ENCODE measurements at regions of chr17 and their contacts with region 1.

Region 1: GRCh38 chr17:64129764-64130558 is at the start of gene ERN1:
- DNase-seq: peak; percentile 93
- H3K4me3 Mint-ChIP-seq: peak within 1 kb of the TSS; percentile 94
- H3K27ac Mint-ChIP-seq: peak within 1 kb of the TSS; percentile 93
- H3K4me1 Mint-ChIP-seq: peaks cover 18% of the 10 kb centered on the region
- H3K27me3 Mint-ChIP-seq: no peaks in the 10 kb centered on the region
- CTCF ChIP-seq: no peak
- total RNA-seq, gene ERN1: 79.5 and 87.0 TPM in 2 replicates

Region 2: GRCh38 chr17:63911657-63912426 is 218.1 kb before region 1 on chr17:
- CTCF ChIA-PET with region 1: interaction called, 14 read pairs
- POLR2A ChIA-PET with region 1: interaction called, 4 read pairs
- intact Hi-C with region 1: no loop called
- DNase-seq: peak; percentile 36
- H3K4me3 Mint-ChIP-seq: no peak overlapping the region
- H3K27ac Mint-ChIP-seq: no peak overlapping the region
- H3K4me1 Mint-ChIP-seq: no peaks in the 10 kb centered on the region
- H3K27me3 Mint-ChIP-seq: peaks cover 29% of the 10 kb centered on the region
- CTCF ChIP-seq: peak; percentile 83

Region 3: DNA sequence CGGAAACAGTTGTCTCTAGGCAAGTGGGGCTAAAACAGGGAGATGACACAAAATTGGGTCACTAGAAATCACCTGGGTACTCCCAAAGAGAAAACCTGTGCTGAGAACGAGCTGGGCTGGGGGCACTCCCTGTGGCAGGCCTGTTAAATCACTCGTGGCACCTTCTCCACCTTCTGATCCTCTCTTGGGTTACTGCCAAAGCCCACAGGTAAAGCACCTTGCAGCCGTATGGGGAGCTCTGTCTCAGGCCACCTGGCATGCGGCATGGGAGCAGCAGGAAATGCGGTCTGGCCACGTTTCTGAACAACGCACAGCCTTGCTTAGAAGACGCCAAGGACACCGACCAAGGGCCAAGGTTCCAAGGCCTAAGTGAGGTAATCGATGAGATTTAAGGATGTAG is 88.0 kb before region 1 on chr17:
- CTCF ChIA-PET with region 1: interaction called, 27 read pairs
- POLR2A ChIA-PET with region 1: interaction called, 3 read pairs
- intact Hi-C with region 1: no loop called
- DNase-seq: no peak
- H3K4me3 Mint-ChIP-seq: no peak overlapping the region
- H3K27ac Mint-ChIP-seq: no peak overlapping the region
- H3K4me1 Mint-ChIP-seq: no peaks in the 10 kb centered on the region
- H3K27me3 Mint-ChIP-seq: no peaks in the 10 kb centered on the region
- CTCF ChIP-seq: no peak

Region 4: DNA sequence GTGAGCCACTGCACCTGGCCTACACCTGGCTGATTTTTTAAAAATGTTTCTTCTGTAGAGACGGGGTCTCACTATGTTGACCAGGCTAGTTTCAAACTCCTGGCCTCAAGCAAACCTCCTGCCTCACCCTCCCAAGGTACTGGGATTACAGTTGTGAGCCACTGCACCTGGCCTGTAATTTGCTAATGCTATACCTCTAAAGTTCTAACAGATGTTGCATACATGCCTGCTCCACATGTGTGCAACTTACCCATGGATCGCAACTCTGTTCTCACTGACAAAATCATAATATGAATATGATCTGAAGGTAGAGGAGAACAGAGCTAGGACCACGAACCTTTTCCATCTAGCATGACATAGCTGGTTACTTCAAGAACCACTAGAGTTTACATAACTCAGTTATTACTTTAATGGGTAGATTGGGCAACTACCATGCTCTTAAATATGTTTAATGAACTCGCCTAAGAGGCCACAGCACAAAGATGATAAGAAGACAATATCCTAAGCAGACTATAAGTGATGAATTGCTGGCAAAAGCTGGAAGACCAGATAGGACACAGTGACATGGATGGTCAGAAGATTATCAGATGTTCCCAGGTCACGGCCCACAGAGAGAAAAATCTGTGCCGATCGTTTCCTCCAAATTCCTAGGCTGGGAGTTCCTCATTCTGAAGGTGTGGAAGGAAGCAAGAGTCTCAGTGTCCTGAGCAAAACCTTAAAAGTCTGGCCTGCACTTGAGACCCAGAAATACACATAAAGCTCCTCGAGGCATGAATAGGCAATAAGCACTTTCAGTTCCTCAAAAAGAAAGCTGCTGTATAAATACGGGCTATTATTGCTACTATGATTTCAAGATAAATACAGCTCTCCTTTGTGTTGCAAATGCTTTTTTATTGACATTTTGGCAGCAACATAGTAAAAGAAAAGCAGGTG is 55.9 kb before region 1 on chr17:
- CTCF ChIA-PET with region 1: interaction called, 16 read pairs
- POLR2A ChIA-PET with region 1: interaction called, 37 read pairs
- intact Hi-C with region 1: loop called (anchors 1 kb)
- DNase-seq: no peak
- H3K4me3 Mint-ChIP-seq: no peak overlapping the region
- H3K27ac Mint-ChIP-seq: peak overlapping the region; percentile 79
- H3K4me1 Mint-ChIP-seq: peaks cover 20% of the 10 kb centered on the region
- H3K27me3 Mint-ChIP-seq: no peaks in the 10 kb centered on the region
- CTCF ChIP-seq: no peak

Region 5: GRCh38 chr17:64117981-64118979 is 11.7 kb before region 1 on chr17:
- CTCF ChIA-PET with region 1: interaction called, 7 read pairs
- POLR2A ChIA-PET with region 1: interaction called, 79 read pairs
- intact Hi-C with region 1: no loop called
- DNase-seq: peak; percentile 76
- H3K4me3 Mint-ChIP-seq: no peak overlapping the region
- H3K27ac Mint-ChIP-seq: no peak overlapping the region
- H3K4me1 Mint-ChIP-seq: peaks cover 44% of the 10 kb centered on the region
- H3K27me3 Mint-ChIP-seq: no peaks in the 10 kb centered on the region
- CTCF ChIP-seq: no peak

Region 6: DNA sequence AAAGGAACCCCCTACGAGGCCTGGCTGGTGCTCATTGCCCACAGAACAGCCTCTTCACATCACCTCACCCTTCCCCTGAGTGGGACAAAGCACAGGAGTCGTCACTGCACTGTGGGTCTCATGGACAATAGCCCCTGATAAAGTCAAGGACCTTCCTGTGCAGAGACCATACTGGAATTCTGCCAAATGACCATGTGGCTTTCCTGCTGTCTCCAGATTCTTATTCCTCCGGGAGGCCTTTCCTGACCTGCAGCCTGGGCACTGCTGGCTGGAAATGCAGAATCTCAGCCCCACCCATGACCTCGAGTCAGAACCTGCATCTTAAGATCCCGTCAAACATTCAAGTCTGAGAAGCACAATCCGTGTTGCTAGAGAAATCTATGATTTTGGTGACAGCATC is 60.5 kb after region 1 on chr17:
- CTCF ChIA-PET with region 1: no interaction called
- POLR2A ChIA-PET with region 1: no interaction called
- intact Hi-C with region 1: no loop called
- DNase-seq: no peak
- H3K4me3 Mint-ChIP-seq: no peak overlapping the region
- H3K27ac Mint-ChIP-seq: no peak overlapping the region
- H3K4me1 Mint-ChIP-seq: no peaks in the 10 kb centered on the region
- H3K27me3 Mint-ChIP-seq: no peaks in the 10 kb centered on the region
- CTCF ChIP-seq: no peak

Region 7: GRCh38 chr17:65181237-65182061 is 1051.5 kb after region 1 on chr17:
- CTCF ChIA-PET with region 1: no interaction called
- POLR2A ChIA-PET with region 1: no interaction called
- intact Hi-C with region 1: no loop called
- DNase-seq: no peak
- H3K4me3 Mint-ChIP-seq: no peak overlapping the region
- H3K27ac Mint-ChIP-seq: no peak overlapping the region
- H3K4me1 Mint-ChIP-seq: peaks cover 6% of the 10 kb centered on the region
- H3K27me3 Mint-ChIP-seq: peaks cover 15% of the 10 kb centered on the region
- CTCF ChIP-seq: no peak

Measured in MCF 10A (cell line).